Pancreas (tissue), 10 donors: ENCODE measurements at regions of chr2 and their contacts with region 1.

Region 1: DNA sequence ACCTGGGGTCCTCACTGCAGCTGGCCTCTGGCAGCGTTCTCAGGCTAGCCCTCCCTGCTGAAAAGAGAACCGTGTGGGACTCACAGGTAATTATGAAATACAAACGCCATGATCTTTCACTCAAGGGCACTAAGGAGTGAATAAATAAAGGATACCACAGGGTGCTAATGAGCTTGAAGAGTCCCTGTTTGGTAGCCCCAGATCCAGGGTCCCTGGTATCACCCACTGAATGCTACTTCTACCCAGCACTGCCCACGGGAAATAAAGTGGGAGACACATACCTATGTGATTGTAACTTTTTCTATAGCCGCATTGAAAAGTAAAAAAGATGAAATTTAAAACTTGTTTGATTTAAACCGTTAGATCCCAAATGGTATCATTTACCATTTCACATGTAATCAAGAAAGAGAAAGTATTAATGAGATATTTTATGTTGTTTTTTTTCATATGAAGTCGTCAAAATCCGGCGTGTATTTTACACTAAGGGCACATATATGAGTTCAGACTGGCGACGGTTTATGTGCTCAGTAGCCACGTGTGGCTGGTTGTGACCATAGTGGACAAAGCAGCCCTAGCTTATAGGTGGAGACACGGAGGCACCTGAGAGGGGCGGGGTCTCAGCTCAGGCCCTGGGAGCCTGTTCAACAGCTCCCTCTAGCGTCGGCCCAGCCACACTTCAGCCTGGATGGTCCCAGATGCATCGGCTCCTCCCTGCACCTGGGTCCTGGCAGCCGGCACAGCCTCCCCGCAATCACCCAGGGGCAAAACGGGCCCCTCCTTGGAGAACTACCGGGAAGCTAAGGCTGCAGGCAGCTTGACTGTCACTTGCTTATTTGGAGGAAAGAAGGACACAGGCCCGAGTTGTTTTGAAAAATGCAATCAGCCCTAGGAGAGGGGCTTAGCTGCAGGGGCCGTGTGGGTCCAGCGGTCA is 39.2 kb downstream of the ODC1 start:
- DNase-seq: peak; percentile 81 to 94 (median 89)
- ATAC-seq: peak; percentile 78 to 90 (median 84)
- H3K4me3 ChIP-seq: no peak overlapping the region
- H3K27ac ChIP-seq: peak overlapping the region; percentile 6 to 88 (median 72)
- H3K4me1 ChIP-seq: peaks cover 33 to 46% (median 33%) of the 10 kb centered on the region in 3 donors
- H3K27me3 ChIP-seq: no peaks in the 10 kb centered on the region
- CTCF ChIP-seq: peak; percentile 88 to 95 (median 90)

Region 2: DNA sequence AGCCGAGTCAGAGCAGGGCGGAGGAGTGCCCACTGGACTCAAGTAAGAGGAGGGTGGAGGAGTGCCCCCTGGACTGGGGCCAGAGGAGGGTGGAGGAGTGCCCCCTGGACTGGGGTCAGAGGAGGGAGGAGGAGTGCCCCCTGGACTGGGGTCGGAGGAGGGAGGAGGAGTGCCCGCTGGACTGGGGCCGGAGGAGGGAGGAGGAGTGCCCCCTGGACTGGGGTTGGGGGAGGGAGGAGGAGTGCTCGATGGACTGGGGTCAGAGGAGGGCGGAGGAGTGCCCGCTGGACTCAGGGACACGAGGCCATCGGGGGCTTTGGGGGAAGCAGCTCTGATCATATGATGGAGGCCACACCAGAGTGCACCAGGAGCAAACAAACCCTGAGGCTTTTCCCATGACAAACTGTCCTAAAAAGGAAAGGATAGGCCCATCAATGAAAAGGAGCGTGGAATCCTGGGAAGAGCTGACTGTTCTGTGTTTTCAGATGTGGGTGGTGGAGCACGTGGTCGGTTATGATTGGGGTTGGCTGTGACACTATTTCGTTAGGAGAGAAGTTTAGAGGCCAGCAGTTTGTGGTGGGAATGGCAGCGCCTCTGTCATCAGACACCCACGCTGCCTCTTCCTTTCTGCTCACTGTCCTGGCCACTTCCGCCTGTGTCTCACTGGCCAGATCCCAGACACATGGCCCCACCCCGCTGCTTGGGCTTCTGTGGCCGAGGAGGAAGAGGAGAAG is 130.7 kb before region 1 on chr2:
- intact Hi-C with region 1: loop called in 1 of 3 experiments (anchors 10 kb)
- DNase-seq: peak in 4 of 6 donors; percentile 38 to 81 (median 64)
- ATAC-seq: peak; percentile 44 to 86 (median 75)
- H3K4me3 ChIP-seq: no peak overlapping the region
- H3K27ac ChIP-seq: peak overlapping the region in 3 of 4 donors; percentile 12 to 58 (median 55)
- H3K4me1 ChIP-seq: no peaks in the 10 kb centered on the region
- H3K27me3 ChIP-seq: no peaks in the 10 kb centered on the region
- CTCF ChIP-seq: no peak

Region 3: GRCh38 chr2:10302479-10303180 is 106.3 kb before region 1 on chr2 and contains the start of gene HPCAL1:
- intact Hi-C with region 1: loop called in 1 of 3 experiments (anchors 10 kb)
- DNase-seq: peak; percentile 87 to 96 (median 92)
- ATAC-seq: peak; percentile 84 to 92 (median 86)
- H3K4me3 ChIP-seq: peak within 1 kb of the TSS; percentile 83 to 99 (median 88)
- H3K27ac ChIP-seq: peak within 1 kb of the TSS; percentile 61 to 84 (median 72)
- H3K4me1 ChIP-seq: peaks cover 8 to 19% (median 15%) of the 10 kb centered on the region in 3 donors
- H3K27me3 ChIP-seq: no peaks in the 10 kb centered on the region
- CTCF ChIP-seq: peak; percentile 36 to 56 (median 44)
- total RNA-seq, gene HPCAL1: 24.3 to 32.7 (median 26.8) TPM

Region 4: GRCh38 chr2:10369269-10370255 is 39.4 kb before region 1 on chr2:
- intact Hi-C with region 1: loop called in 1 of 3 experiments (anchors 5 kb)
- DNase-seq: peak in 2 of 6 donors; percentile 38 to 46
- ATAC-seq: peak in 3 of 4 donors; percentile 24 to 36 (median 30)
- H3K4me3 ChIP-seq: peak overlapping the region in 1 of 4 donors; percentile 17
- H3K27ac ChIP-seq: peak overlapping the region; percentile 19 to 83 (median 62)
- H3K4me1 ChIP-seq: peaks cover 46 to 77% (median 62%) of the 10 kb centered on the region in 3 donors
- H3K27me3 ChIP-seq: no peaks in the 10 kb centered on the region
- CTCF ChIP-seq: no peak

Region 5: GRCh38 chr2:10514743-10515142 is 105.8 kb after region 1 on chr2:
- intact Hi-C with region 1: no loop called
- DNase-seq: no peak
- ATAC-seq: no peak
- H3K4me3 ChIP-seq: no peak overlapping the region
- H3K27ac ChIP-seq: no peak overlapping the region
- H3K4me1 ChIP-seq: no peaks in the 10 kb centered on the region
- H3K27me3 ChIP-seq: no peaks in the 10 kb centered on the region
- CTCF ChIP-seq: no peak